ENCODE measurements at regions of chr18 and their contacts with region 1.

Region 1: GRCh38 chr18:8771930-8772329 is 66.6 kb downstream of the MTCL1 start:
- DNase-seq: no peak
- H3K4me3 Mint-ChIP-seq: no peak overlapping the region
- H3K27ac Mint-ChIP-seq: no peak overlapping the region
- H3K4me1 Mint-ChIP-seq: no peaks in the 10 kb centered on the region
- H3K27me3 Mint-ChIP-seq: peaks cover 3% of the 10 kb centered on the region

Region 2: GRCh38 chr18:8654503-8655451 is 117.2 kb before region 1 on chr18:
- intact Hi-C with region 1: no loop called
- DNase-seq: no peak
- H3K4me3 Mint-ChIP-seq: no peak overlapping the region
- H3K27ac Mint-ChIP-seq: no peak overlapping the region
- H3K4me1 Mint-ChIP-seq: no peaks in the 10 kb centered on the region
- H3K27me3 Mint-ChIP-seq: peaks cover 22% of the 10 kb centered on the region

Region 3: DNA sequence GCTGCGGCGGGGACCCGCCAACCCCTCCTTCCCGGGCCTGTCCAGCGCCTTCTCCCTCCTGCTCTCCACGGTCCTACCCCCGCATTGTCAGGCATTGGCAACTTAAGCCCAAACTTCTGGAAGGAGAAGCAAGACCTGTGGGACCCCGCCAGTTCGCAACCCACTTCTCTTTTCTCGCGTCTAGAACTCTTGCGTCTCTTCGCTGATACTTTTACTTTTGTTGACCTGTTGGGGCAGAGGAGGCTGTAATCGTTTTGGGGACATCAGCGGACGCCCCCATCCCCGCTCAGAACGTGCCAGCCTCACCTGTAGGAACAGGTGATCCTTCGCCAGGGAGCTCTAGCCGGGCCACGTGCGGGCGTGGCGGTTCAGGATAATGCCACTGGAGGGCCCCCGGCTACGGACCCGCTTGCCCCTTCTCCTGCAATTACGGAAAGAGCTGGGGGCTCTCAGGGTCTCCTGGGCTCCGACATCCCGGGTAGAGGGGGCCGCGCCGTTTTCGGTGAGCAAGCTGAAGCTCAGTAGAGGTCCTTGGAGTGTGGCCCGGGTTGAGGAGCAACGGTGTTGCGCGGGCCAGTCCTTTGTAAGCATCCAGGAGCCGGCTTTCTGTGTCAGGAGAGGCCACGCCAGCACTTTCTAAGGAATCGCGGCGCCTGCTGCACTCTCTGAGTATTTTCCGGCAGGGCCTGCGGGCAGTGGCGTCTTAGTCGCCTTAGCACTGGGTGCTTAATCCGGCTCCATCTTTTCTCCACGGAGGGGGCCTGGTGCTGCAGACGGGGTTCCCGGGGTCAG is 65.0 kb before region 1 on chr18:
- intact Hi-C with region 1: no loop called
- DNase-seq: no peak
- H3K4me3 Mint-ChIP-seq: peak overlapping the region; percentile 80
- H3K27ac Mint-ChIP-seq: peak overlapping the region; percentile 79
- H3K4me1 Mint-ChIP-seq: peaks cover 14% of the 10 kb centered on the region
- H3K27me3 Mint-ChIP-seq: peaks cover 62% of the 10 kb centered on the region

Region 4: DNA sequence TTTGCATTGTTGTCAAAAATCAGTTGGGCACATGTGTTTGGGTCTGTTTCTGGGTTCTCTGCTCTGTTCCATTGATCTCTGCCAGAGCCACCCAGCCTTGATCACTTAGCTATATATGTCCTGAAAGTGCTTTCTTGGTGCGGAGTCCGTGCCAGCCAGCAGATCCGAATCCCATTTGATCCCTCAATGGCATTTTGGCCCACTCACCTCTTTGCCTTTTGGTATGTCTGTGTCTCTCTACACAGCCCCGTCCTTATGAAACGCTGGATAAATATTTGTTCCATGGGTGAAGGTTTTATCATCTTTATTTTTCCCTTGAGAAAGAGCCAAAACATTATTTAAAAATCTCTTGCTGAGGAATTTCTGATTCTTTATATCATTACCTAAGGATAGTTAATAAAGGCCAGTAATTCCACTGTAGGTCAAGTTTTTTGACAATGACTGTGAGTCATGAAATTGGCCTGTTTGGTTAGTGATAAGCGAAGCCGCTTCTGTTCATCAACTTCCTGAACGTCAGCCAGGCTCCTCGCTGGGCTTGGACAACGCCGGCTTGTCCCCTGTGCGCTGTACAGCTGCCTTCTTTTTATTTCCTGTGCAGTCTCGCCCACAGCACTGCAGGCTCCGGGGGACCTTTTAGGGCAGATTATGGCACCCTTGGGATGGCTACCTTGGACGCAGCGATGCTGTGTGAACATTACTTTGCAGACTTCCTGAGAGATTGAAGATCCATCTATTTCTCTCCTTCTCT is 41.7 kb before region 1 on chr18:
- intact Hi-C with region 1: no loop called
- DNase-seq: no peak
- H3K4me3 Mint-ChIP-seq: no peak overlapping the region
- H3K27ac Mint-ChIP-seq: no peak overlapping the region
- H3K4me1 Mint-ChIP-seq: no peaks in the 10 kb centered on the region
- H3K27me3 Mint-ChIP-seq: peaks cover 2% of the 10 kb centered on the region

Region 5: GRCh38 chr18:8793445-8794132 is 21.7 kb after region 1 on chr18:
- intact Hi-C with region 1: loop called (anchors 2 kb)
- DNase-seq: no peak
- H3K4me3 Mint-ChIP-seq: no peak overlapping the region
- H3K27ac Mint-ChIP-seq: no peak overlapping the region
- H3K4me1 Mint-ChIP-seq: no peaks in the 10 kb centered on the region
- H3K27me3 Mint-ChIP-seq: peaks cover 14% of the 10 kb centered on the region

Region 6: DNA sequence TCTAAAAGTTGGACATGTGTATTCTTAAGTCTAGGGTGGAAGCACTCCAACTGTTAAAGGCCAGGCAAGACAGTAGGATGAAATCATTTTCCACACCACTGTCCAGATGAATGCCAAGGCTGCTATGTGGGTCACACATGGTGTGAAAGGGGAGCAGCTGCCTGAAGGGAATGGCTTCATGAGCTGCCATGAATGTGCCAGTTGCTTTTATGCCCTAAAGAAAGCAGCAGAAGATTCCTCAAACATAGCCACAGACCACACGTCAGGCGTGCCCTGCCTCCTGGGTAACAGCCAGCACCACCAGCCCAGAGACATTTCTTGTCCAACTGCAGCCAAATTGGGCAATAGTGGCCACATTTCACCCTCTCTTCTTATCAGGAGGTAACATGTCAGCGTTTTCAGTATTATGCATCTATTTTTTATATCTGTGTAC is 63.6 kb after region 1 on chr18:
- intact Hi-C with region 1: no loop called
- DNase-seq: no peak
- H3K4me3 Mint-ChIP-seq: no peak overlapping the region
- H3K27ac Mint-ChIP-seq: no peak overlapping the region
- H3K4me1 Mint-ChIP-seq: no peaks in the 10 kb centered on the region
- H3K27me3 Mint-ChIP-seq: peaks cover 7% of the 10 kb centered on the region